Mammary epithelial cell (primary cell): ENCODE measurements at regions of chr2 and their contacts with region 1.

Region 1: GRCh38 chr2:30711646-30712085 is 95.6 kb downstream of the CAPN13 start:
- DNase-seq: peak; percentile 72
- H3K4me3 ChIP-seq: no peak overlapping the region
- H3K27ac ChIP-seq: no peak overlapping the region
- H3K4me1 ChIP-seq: no peaks in the 10 kb centered on the region
- H3K27me3 ChIP-seq: peaks cover 2% of the 10 kb centered on the region
- CTCF ChIP-seq: peak; percentile 100

Region 2: GRCh38 chr2:30208452-30208851 is 503.2 kb before region 1 on chr2:
- CTCF ChIA-PET with region 1: interaction called, 6 read pairs
- dilution Hi-C with region 1: no loop called
- in situ Hi-C with region 1: loop called (anchors 5 kb)
- intact Hi-C with region 1: loop called (anchors 1 kb)
- DNase-seq: peak; percentile 39
- H3K4me3 ChIP-seq: no peak overlapping the region
- H3K27ac ChIP-seq: no peak overlapping the region
- H3K4me1 ChIP-seq: no peaks in the 10 kb centered on the region
- H3K27me3 ChIP-seq: peaks cover 9% of the 10 kb centered on the region
- CTCF ChIP-seq: peak; percentile 88 to 90

Region 3: DNA sequence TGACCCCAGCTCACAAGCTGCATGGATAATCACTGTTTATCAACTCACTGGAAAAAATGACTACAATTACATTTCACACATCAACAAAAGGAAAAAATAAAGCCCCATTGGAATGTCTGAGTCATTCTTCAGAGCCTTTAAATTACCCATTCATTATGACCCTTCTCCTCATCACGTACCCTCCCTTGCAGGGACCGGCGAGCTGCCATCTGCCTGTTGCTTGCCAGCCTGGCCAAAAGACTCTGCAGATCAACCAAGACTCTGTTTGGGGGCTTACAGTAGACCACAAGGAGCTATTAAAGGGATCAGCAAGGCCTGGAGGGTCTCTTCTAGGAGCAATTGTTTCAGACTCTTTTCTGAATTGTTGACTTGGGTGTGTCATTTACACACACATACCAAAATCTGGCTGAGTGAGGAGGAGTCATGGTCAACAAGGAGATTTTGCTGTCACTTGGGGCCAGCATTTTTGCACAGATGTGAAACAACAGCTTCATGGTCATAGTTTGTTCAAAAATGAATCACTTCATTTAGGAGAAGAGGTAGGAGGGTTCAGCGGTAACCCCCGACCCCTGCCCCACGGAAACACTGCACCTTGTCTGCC is 438.3 kb before region 1 on chr2:
- CTCF ChIA-PET with region 1: no interaction called
- dilution Hi-C with region 1: no loop called
- in situ Hi-C with region 1: no loop called
- intact Hi-C with region 1: no loop called
- DNase-seq: no peak
- H3K4me3 ChIP-seq: no peak overlapping the region
- H3K27ac ChIP-seq: no peak overlapping the region
- H3K4me1 ChIP-seq: peaks cover 27% of the 10 kb centered on the region
- H3K27me3 ChIP-seq: no peaks in the 10 kb centered on the region
- CTCF ChIP-seq: no peak

Region 4: GRCh38 chr2:30481323-30481800 is 230.3 kb before region 1 on chr2:
- CTCF ChIA-PET with region 1: no interaction called
- dilution Hi-C with region 1: no loop called
- in situ Hi-C with region 1: no loop called
- intact Hi-C with region 1: loop called (anchors 10 kb)
- DNase-seq: no peak
- H3K4me3 ChIP-seq: no peak overlapping the region
- H3K27ac ChIP-seq: no peak overlapping the region
- H3K4me1 ChIP-seq: no peaks in the 10 kb centered on the region
- H3K27me3 ChIP-seq: no peaks in the 10 kb centered on the region
- CTCF ChIP-seq: no peak

Region 5: DNA sequence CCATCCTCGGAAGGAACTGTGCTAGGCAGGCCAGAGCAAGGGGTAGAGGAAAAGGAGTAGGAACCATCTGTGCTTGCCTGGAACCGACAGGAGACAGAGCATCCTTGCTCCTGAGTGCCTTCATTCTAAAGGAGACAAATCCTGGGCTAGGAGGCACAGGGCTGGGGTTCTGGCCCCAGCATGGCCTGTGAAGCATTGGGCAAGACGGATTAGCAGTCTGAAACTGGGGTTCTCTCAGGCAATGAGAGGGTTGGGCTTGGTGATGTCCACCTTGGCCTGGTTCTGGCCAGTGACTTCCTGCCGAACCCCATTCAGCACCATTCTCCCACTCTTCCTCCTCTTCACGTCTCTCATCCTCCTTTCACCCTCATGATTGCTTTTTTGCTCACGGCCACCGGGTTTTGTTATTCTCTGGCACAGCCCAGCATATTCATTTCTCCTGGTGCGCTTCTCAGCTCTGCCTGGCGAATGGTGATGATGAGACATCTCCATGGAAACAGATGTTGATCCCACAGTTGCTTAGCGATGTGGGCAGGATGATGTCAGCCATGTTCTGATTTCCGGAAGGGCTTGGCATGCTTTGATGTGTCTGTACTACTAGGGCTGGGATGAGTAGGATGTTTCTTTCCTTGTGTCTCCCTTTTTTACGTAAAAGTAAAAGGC is 32.1 kb before region 1 on chr2:
- CTCF ChIA-PET with region 1: no interaction called
- dilution Hi-C with region 1: no loop called
- in situ Hi-C with region 1: no loop called
- intact Hi-C with region 1: no loop called
- DNase-seq: no peak
- H3K4me3 ChIP-seq: no peak overlapping the region
- H3K27ac ChIP-seq: no peak overlapping the region
- H3K4me1 ChIP-seq: no peaks in the 10 kb centered on the region
- H3K27me3 ChIP-seq: no peaks in the 10 kb centered on the region
- CTCF ChIP-seq: no peak

Region 6: GRCh38 chr2:31138037-31138962 is 426.6 kb after region 1 on chr2 and contains the start of gene GALNT14:
- CTCF ChIA-PET with region 1: interaction called, 8 read pairs
- dilution Hi-C with region 1: no loop called
- in situ Hi-C with region 1: no loop called
- intact Hi-C with region 1: loop called (anchors 1 kb)
- DNase-seq: peak; percentile 82
- H3K4me3 ChIP-seq: peak within 1 kb of the TSS; percentile 71 to 88 (median 80)
- H3K27ac ChIP-seq: peak within 1 kb of the TSS; percentile 59
- H3K4me1 ChIP-seq: no peaks in the 10 kb centered on the region
- H3K27me3 ChIP-seq: no peaks in the 10 kb centered on the region
- CTCF ChIP-seq: peak; percentile 52 to 72
- total RNA-seq, gene GALNT14: 12.7 to 29.9 TPM

Region 7: DNA sequence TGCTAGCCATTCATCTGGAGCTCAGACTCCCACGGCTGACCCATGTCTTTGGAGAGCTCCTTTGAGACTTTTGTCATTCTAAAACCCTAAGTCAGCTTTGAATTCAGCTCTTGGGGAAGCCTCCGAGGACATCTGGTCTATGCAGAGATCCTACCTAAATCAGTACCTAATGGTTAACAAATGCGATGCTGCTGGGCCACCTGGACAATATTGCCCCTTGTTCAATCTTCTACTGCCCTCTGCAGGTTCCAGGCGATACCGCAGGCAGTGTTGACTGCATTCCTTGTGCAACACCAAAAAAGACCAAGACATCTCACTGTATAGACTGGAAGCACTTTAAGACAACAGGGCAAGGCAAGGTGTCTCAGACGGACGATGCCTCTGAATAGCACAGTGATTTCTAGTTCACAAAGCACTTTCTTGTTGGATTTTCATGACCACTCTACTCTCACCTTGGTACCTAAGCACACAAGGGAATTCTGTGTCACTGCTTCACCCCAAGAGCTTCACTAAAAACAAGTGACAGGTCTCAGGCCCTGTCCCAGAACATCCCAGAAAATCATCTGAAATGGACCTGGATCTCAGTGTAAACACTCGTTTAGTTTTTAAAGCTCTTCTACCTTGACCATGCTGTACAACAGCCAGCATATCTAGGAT is 622.0 kb after region 1 on chr2:
- CTCF ChIA-PET with region 1: no interaction called
- dilution Hi-C with region 1: no loop called
- in situ Hi-C with region 1: loop called in 1 of 2 experiments (anchors 10 kb)
- intact Hi-C with region 1: loop called (anchors 1 kb)
- DNase-seq: peak; percentile 82
- H3K4me3 ChIP-seq: no peak overlapping the region
- H3K27ac ChIP-seq: peak overlapping the region; percentile 93
- H3K4me1 ChIP-seq: peaks cover 48% of the 10 kb centered on the region
- H3K27me3 ChIP-seq: no peaks in the 10 kb centered on the region
- CTCF ChIP-seq: peak; percentile 98 to 99

Region 8: DNA sequence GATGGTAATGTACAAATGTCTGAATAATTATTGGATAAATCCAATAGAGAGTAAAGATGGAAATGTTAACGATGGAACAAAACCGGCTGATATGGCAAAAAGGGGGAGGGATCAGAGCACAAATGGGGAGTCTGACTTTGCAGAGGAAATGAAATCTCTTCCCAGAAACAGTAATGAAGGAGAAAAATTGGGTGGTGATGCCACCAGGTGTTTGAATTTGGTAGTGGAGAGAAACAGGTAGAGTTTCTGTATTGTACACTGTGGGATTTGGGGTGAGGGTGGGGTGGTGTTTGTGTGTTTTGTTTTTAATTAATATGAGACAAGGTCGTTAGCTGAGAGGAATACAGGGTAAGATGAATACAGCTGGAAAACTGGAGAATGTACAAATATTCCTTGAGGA is 723.2 kb after region 1 on chr2:
- CTCF ChIA-PET with region 1: interaction called, 3 read pairs
- dilution Hi-C with region 1: no loop called
- in situ Hi-C with region 1: loop called in 1 of 2 experiments (anchors 25 kb)
- intact Hi-C with region 1: loop called (anchors 2 kb)
- DNase-seq: peak; percentile 44
- H3K4me3 ChIP-seq: no peak overlapping the region
- H3K27ac ChIP-seq: no peak overlapping the region
- H3K4me1 ChIP-seq: peaks cover 19% of the 10 kb centered on the region
- H3K27me3 ChIP-seq: no peaks in the 10 kb centered on the region
- CTCF ChIP-seq: peak; percentile 59 to 73

Region 9: DNA sequence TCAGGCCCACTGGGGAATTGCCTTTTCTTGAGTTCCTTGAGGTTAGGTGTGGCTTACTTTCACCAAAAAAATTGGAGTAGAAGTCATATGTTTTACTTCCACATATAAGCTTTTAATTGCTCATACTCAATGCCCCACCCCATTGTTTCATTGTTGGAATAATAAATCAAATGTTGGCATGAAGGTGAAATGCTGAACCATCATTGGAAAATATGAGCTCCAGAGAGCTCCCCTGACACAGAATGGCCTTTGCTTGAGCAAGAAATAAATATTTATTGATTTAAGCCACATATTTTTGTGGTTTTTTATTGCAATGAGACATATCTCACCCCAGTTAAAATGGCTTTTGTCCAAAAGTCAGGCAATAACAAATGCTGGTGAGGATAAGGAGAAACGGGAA is 1036.4 kb after region 1 on chr2:
- CTCF ChIA-PET with region 1: no interaction called
- dilution Hi-C with region 1: no loop called
- in situ Hi-C with region 1: no loop called
- intact Hi-C with region 1: no loop called
- DNase-seq: peak; percentile 26
- H3K4me3 ChIP-seq: no peak overlapping the region
- H3K27ac ChIP-seq: no peak overlapping the region
- H3K4me1 ChIP-seq: no peaks in the 10 kb centered on the region
- H3K27me3 ChIP-seq: no peaks in the 10 kb centered on the region
- CTCF ChIP-seq: no peak

Region 10: GRCh38 chr2:32003791-32004190 is 1292.1 kb after region 1 on chr2:
- CTCF ChIA-PET with region 1: interaction called, 23 read pairs
- dilution Hi-C with region 1: no loop called
- in situ Hi-C with region 1: no loop called
- intact Hi-C with region 1: no loop called
- DNase-seq: peak; percentile 75
- H3K4me3 ChIP-seq: no peak overlapping the region
- H3K27ac ChIP-seq: peak overlapping the region; percentile 54
- H3K4me1 ChIP-seq: peaks cover 37% of the 10 kb centered on the region
- H3K27me3 ChIP-seq: no peaks in the 10 kb centered on the region
- CTCF ChIP-seq: no peak